Endothelial cell of umbilical vein (primary cell): ENCODE measurements at regions of chr4 and their contacts with region 1.

Region 1: GRCh38 chr4:152535903-152536544 is at the start of gene FBXW7:
- DNase-seq: peak; percentile 99
- H3K4me3 ChIP-seq: peak within 1 kb of the TSS; percentile 82 to 91 (median 82)
- H3K27ac ChIP-seq: peak within 1 kb of the TSS; percentile 70
- H3K4me1 ChIP-seq: peaks cover 21% of the 10 kb centered on the region
- H3K27me3 ChIP-seq: no peaks in the 10 kb centered on the region
- CTCF ChIP-seq: no peak
- POLR2A ChIP-seq: peak; percentile 60
- total RNA-seq, gene FBXW7: 27.9 and 28.1 TPM in 2 replicates

Region 2: GRCh38 chr4:151418385-151418784 is 1117.6 kb before region 1 on chr4:
- CTCF ChIA-PET with region 1: no interaction called
- POLR2A ChIA-PET with region 1: no interaction called
- dilution Hi-C with region 1: no loop called
- intact Hi-C with region 1: loop called (anchors 5 kb)
- DNase-seq: peak; percentile 91
- H3K4me3 ChIP-seq: no peak overlapping the region
- H3K27ac ChIP-seq: peak overlapping the region; percentile 89
- H3K4me1 ChIP-seq: peaks cover 43% of the 10 kb centered on the region
- H3K27me3 ChIP-seq: no peaks in the 10 kb centered on the region
- CTCF ChIP-seq: no peak
- POLR2A ChIP-seq: peak; percentile 35

Region 3: DNA sequence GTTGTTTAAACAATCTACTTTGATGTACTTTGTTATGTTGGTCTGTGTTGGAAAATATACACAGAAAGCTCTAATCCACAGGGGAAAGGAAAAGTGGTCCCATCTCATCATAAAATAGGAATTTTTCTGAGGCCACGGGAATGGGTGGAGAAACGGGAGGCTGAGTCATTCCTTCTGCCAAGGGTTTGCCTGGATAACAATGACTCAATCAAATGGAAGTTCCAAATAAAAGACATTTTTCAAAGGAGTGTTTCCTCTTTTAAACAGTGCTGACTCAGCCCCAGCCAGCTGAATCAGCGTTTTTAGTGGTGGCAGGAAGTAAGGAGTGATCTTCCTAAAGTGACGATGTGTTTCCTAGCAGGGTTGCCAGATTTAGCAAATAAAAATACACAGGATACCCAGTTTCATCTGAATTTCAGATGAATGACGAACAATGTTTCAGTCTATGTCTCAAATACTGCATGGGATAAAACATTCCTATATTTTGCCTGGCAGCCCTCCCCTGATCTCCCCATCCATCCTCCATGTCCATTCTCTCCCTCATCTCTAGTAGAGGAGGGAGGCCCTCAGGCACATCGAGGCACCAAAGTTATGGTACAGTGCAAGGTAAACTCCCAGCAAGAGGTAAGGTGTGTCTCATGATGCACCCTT is 429.8 kb before region 1 on chr4:
- CTCF ChIA-PET with region 1: no interaction called
- POLR2A ChIA-PET with region 1: no interaction called
- dilution Hi-C with region 1: no loop called
- intact Hi-C with region 1: loop called (anchors 5 kb)
- DNase-seq: peak; percentile 96
- H3K4me3 ChIP-seq: no peak overlapping the region
- H3K27ac ChIP-seq: peak overlapping the region; percentile 82
- H3K4me1 ChIP-seq: peaks cover 16% of the 10 kb centered on the region
- H3K27me3 ChIP-seq: no peaks in the 10 kb centered on the region
- CTCF ChIP-seq: no peak
- POLR2A ChIP-seq: no peak

Region 4: GRCh38 chr4:152176627-152177214 is 359.3 kb before region 1 on chr4:
- CTCF ChIA-PET with region 1: no interaction called
- POLR2A ChIA-PET with region 1: no interaction called
- dilution Hi-C with region 1: no loop called
- intact Hi-C with region 1: no loop called
- DNase-seq: no peak
- H3K4me3 ChIP-seq: no peak overlapping the region
- H3K27ac ChIP-seq: no peak overlapping the region
- H3K4me1 ChIP-seq: no peaks in the 10 kb centered on the region
- H3K27me3 ChIP-seq: peaks cover 3 to 4% of the 10 kb centered on the region in 2 experiments
- CTCF ChIP-seq: no peak
- POLR2A ChIP-seq: no peak

Region 5: GRCh38 chr4:152510349-152511147 is 25.5 kb before region 1 on chr4:
- CTCF ChIA-PET with region 1: no interaction called
- POLR2A ChIA-PET with region 1: no interaction called
- dilution Hi-C with region 1: no loop called
- intact Hi-C with region 1: loop called (anchors 1 kb)
- DNase-seq: no peak
- H3K4me3 ChIP-seq: no peak overlapping the region
- H3K27ac ChIP-seq: no peak overlapping the region
- H3K4me1 ChIP-seq: peaks cover 18% of the 10 kb centered on the region
- H3K27me3 ChIP-seq: no peaks in the 10 kb centered on the region
- CTCF ChIP-seq: no peak
- POLR2A ChIP-seq: no peak

Region 6: GRCh38 chr4:152640058-152640833 is 104.2 kb after region 1 on chr4:
- CTCF ChIA-PET with region 1: interaction called, 3 read pairs
- POLR2A ChIA-PET with region 1: no interaction called
- dilution Hi-C with region 1: no loop called
- intact Hi-C with region 1: loop called (anchors 1 kb)
- DNase-seq: peak; percentile 30
- H3K4me3 ChIP-seq: no peak overlapping the region
- H3K27ac ChIP-seq: no peak overlapping the region
- H3K4me1 ChIP-seq: no peaks in the 10 kb centered on the region
- H3K27me3 ChIP-seq: no peaks in the 10 kb centered on the region
- CTCF ChIP-seq: peak in 1 of 2 donors; percentile 29
- POLR2A ChIP-seq: no peak

Region 7: DNA sequence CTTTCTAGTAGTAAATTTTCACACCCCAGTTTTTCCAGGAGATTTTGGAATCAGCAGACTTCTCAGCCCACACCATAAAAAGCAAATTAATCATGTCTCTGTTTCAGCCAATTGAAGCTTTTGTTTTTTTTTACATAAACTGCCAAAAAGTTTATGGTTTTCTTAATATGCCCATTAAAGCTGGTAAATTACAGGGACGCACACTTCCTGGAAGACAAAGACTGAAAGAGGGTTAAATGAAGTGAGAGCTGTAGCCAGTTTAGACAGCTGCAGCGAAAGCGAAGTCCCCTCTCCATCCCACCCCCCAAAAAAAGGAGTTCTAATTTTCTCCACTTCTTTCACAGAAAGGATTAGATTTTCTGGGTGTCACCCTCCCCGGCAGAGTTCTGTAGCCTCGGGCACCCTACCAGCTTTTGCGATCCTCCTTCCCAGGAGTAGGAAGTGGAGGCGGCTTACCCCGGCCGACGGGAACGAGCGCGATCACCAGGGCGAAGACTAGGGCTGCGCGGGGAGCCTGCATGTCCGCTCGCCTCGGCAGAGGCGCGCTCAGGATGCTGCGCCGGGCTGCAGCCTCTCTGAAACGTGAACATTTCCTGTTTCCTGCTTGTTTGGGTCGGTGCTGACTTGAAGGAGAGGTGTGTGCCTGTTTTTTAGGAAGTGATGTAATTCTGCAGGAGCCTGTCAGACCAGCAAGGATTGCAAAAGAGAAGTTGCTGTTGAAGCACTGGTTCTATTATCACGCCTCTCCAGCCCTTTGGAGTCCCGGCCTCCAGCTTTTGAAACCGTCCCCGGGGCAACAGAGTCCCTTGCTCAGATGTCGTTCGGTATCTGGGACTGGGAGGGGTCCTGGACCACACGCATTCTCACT is 143.6 kb after region 1 on chr4 and contains the start of gene TMEM154:
- CTCF ChIA-PET with region 1: no interaction called
- POLR2A ChIA-PET with region 1: no interaction called
- dilution Hi-C with region 1: no loop called
- intact Hi-C with region 1: loop called (anchors 1 kb)
- DNase-seq: peak; percentile 75
- H3K4me3 ChIP-seq: peak within 1 kb of the TSS; percentile 49 to 93 (median 83)
- H3K27ac ChIP-seq: peak within 1 kb of the TSS; percentile 85
- H3K4me1 ChIP-seq: peaks cover 44% of the 10 kb centered on the region
- H3K27me3 ChIP-seq: no peaks in the 10 kb centered on the region
- CTCF ChIP-seq: no peak
- POLR2A ChIP-seq: peak; percentile 84
- total RNA-seq, gene TMEM154: 43.6 and 50.0 TPM in 2 replicates

Region 8: GRCh38 chr4:152779513-152780266 is 243.7 kb after region 1 on chr4 and contains the starts of genes ARFIP1 and TIGD4:
- CTCF ChIA-PET with region 1: interaction called, 3 read pairs
- POLR2A ChIA-PET with region 1: no interaction called
- dilution Hi-C with region 1: no loop called
- intact Hi-C with region 1: loop called (anchors 1 kb)
- DNase-seq: peak; percentile 96
- H3K4me3 ChIP-seq: peak within 1 kb of the TSS; percentile 67 to 76 (median 74)
- H3K27ac ChIP-seq: peak within 1 kb of the TSS; percentile 56
- H3K4me1 ChIP-seq: peaks cover 21% of the 10 kb centered on the region
- H3K27me3 ChIP-seq: peaks cover 0 to 11% of the 10 kb centered on the region in 2 experiments
- CTCF ChIP-seq: peak in 1 of 2 donors; percentile 4
- POLR2A ChIP-seq: peak; percentile 62
- total RNA-seq, gene ARFIP1: 24.2 and 24.6 TPM in 2 replicates
- total RNA-seq, gene TIGD4: 0.14 and 0.18 TPM in 2 replicates